ENCODE measurements at regions of chr7 and their contacts with region 1.

Region 1: DNA sequence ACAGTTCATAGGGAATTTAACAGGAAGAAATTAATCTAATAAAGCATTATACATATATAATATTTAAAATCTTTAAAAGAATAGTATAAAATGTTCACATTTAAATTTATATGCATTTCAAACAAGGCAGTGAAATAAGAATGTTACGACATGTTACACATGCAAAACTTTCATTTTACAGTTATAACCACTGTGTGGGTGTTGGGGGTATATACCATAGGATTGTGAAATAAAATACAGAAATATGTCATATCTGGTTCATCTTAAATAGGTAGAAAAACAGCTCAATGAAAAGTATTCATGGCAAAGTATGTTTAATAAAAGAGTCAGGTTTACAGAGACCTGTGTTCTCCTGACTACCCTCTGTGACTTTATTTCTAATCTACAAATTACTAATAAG is 45.6 kb downstream of the CHCHD3 start:
- DNase-seq: no peak
- ATAC-seq: no peak
- H3K4me3 ChIP-seq: no peak overlapping the region
- H3K4me3 Mint-ChIP-seq: no peak overlapping the region
- H3K27ac ChIP-seq: no peak overlapping the region
- H3K27ac Mint-ChIP-seq: no peak overlapping the region
- H3K4me1 ChIP-seq: peaks cover 0 to 5% of the 10 kb centered on the region in 2 donors
- H3K4me1 Mint-ChIP-seq: peaks cover 11% of the 10 kb centered on the region
- H3K27me3 ChIP-seq: no peaks in the 10 kb centered on the region
- H3K27me3 Mint-ChIP-seq: no peaks in the 10 kb centered on the region
- CTCF ChIP-seq: no peak

Region 2: DNA sequence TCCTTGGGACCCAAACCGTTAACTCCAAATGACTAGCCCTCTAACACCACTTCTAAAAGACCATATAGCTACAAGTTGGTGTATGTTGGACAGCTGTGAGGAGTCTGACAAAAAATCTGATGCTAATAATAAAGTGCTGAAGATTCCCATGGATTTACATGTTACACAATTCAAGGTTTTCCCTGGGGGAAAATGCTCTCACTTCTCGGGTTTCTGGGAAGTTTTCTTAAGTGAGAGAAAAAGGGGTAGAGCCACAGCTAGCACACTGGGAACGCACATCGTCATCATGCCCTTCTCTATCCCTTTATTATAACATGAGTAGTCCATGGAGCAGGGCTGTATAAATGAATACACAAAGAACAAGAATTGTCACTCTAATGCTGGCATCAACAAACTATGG is 116.5 kb before region 1 on chr7:
- CTCF ChIA-PET with region 1: no interaction called
- POLR2A ChIA-PET with region 1: no interaction called
- intact Hi-C with region 1: no loop called
- DNase-seq: no peak
- ATAC-seq: no peak
- H3K4me3 ChIP-seq: no peak overlapping the region
- H3K4me3 Mint-ChIP-seq: no peak overlapping the region
- H3K27ac ChIP-seq: no peak overlapping the region
- H3K27ac Mint-ChIP-seq: no peak overlapping the region
- H3K4me1 ChIP-seq: no peaks in the 10 kb centered on the region
- H3K4me1 Mint-ChIP-seq: no peaks in the 10 kb centered on the region
- H3K27me3 ChIP-seq: no peaks in the 10 kb centered on the region
- H3K27me3 Mint-ChIP-seq: no peaks in the 10 kb centered on the region
- CTCF ChIP-seq: no peak

Region 3: GRCh38 chr7:133081599-133082389 is 45.5 kb after region 1 on chr7 and contains the start of gene CHCHD3:
- CTCF ChIA-PET with region 1: interaction called, 3 read pairs
- POLR2A ChIA-PET with region 1: no interaction called
- intact Hi-C with region 1: loop called (anchors 1 kb)
- DNase-seq: peak; percentile 97
- ATAC-seq: peak; percentile 99
- H3K4me3 ChIP-seq: peak within 1 kb of the TSS; percentile 71 to 96 (median 91)
- H3K4me3 Mint-ChIP-seq: peak within 1 kb of the TSS; percentile 93
- H3K27ac ChIP-seq: peak within 1 kb of the TSS; percentile 79 to 98
- H3K27ac Mint-ChIP-seq: peak within 1 kb of the TSS; percentile 95
- H3K4me1 ChIP-seq: peaks cover 11% of the 10 kb centered on the region in 2 donors
- H3K4me1 Mint-ChIP-seq: peaks cover 24% of the 10 kb centered on the region
- H3K27me3 ChIP-seq: no peaks in the 10 kb centered on the region
- H3K27me3 Mint-ChIP-seq: peaks cover 6% of the 10 kb centered on the region
- CTCF ChIP-seq: no peak
- total RNA-seq, gene CHCHD3: 38.4 and 40.8 TPM in 2 replicates

Region 4: DNA sequence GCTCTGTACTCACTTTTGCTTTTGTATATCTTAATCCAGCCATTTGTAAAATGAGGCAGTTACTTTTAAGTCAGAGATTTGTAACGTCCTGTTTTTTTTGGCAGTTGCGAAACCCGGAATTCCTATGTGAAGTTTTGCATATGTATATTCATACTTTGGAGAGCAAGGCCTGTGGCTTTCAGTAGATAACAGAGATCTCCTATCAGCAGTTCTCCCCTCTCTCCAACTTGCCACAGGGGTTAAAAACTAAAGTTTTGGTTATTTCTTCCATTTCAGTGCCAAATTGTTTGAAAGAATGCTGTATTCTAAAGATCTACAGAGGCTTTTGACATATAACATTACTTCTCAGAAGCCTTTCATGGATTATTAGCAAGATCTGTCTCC is 319.0 kb after region 1 on chr7:
- CTCF ChIA-PET with region 1: no interaction called
- POLR2A ChIA-PET with region 1: no interaction called
- intact Hi-C with region 1: no loop called
- DNase-seq: no peak
- ATAC-seq: no peak
- H3K4me3 ChIP-seq: no peak overlapping the region
- H3K4me3 Mint-ChIP-seq: no peak overlapping the region
- H3K27ac ChIP-seq: no peak overlapping the region
- H3K27ac Mint-ChIP-seq: no peak overlapping the region
- H3K4me1 ChIP-seq: no peaks in the 10 kb centered on the region
- H3K4me1 Mint-ChIP-seq: no peaks in the 10 kb centered on the region
- H3K27me3 ChIP-seq: no peaks in the 10 kb centered on the region
- H3K27me3 Mint-ChIP-seq: no peaks in the 10 kb centered on the region
- CTCF ChIP-seq: no peak

Measured in B cell (primary cell).